GM12878 (cell line): ENCODE measurements at regions of chr20 and their contacts with region 1.

Region 1: DNA sequence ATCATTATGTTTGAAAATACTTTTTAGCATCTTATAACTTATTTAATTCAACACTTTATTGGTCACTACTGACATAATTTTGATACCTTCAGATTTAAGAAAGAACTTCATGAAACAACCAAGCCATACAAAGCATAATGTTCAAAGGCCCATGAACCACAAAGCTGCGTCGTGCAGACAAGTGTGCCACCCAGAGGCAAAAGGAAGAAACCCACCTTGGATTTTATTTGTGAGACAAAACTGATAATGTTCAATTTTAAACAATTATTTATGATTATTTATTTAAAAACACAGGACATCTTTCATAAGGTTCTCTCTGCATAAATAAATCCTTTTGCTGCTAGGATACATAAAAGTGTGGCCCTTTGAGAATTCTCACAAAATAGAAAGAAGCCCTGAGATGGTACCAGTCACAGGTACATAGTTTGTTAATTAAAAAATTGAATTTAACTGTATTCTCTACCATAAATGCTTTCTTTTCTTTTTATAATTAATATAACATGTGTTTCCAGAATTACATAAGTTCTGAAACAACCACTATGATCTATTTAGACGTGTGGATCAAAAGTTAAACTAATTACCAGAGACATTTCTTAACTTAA is 143.7 kb downstream of the RALGAPA2 start:
- DNase-seq: no peak
- ATAC-seq: peak; percentile 66
- H3K4me3 ChIP-seq: no peak overlapping the region
- H3K27ac ChIP-seq: no peak overlapping the region
- H3K4me1 ChIP-seq: no peaks in the 10 kb centered on the region
- H3K27me3 ChIP-seq: no peaks in the 10 kb centered on the region
- CTCF ChIP-seq: peak; percentile 65 to 88 (median 69)
- EP300 ChIP-seq: no peak
- POLR2A ChIP-seq: no peak
- RAD21 ChIP-seq: peak; percentile 98

Region 2: DNA sequence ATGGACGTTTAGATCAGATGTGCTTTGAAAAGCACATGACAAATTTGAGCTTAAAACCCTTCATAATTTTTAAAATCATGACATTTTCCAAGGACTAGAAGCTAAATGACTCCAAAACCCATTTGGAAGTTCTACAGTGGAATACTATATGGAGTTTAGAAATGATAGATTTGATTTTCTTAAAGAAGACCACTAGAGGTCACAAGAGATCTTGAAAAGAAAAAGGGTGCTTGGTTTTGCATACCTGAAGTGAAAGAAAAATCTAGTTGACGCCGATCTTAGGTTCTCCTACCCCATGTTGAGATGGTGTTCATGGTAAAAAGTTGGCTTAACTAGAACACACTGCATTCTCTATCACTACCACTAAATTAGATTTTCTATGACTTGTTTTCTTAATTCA is 484.9 kb before region 1 on chr20:
- CTCF ChIA-PET with region 1: interaction called, 21 read pairs
- POLR2A ChIA-PET with region 1: no interaction called
- RAD21 ChIA-PET with region 1: interaction called, 5 read pairs
- SMC1A ChIA-PET with region 1: interaction called, 5 read pairs
- in situ Hi-C with region 1: loop called (anchors 5 kb)
- intact Hi-C with region 1: loop called (anchors 2 kb)
- DNase-seq: peak; percentile 2
- ATAC-seq: peak; percentile 81
- H3K4me3 ChIP-seq: no peak overlapping the region
- H3K27ac ChIP-seq: no peak overlapping the region
- H3K4me1 ChIP-seq: no peaks in the 10 kb centered on the region
- H3K27me3 ChIP-seq: no peaks in the 10 kb centered on the region; a peak in 2 of 4 replicates
- CTCF ChIP-seq: peak; percentile 31 to 56 (median 43); a peak in 4 of 6 replicates
- EP300 ChIP-seq: no peak
- POLR2A ChIP-seq: no peak
- RAD21 ChIP-seq: peak; percentile 69

Region 3: DNA sequence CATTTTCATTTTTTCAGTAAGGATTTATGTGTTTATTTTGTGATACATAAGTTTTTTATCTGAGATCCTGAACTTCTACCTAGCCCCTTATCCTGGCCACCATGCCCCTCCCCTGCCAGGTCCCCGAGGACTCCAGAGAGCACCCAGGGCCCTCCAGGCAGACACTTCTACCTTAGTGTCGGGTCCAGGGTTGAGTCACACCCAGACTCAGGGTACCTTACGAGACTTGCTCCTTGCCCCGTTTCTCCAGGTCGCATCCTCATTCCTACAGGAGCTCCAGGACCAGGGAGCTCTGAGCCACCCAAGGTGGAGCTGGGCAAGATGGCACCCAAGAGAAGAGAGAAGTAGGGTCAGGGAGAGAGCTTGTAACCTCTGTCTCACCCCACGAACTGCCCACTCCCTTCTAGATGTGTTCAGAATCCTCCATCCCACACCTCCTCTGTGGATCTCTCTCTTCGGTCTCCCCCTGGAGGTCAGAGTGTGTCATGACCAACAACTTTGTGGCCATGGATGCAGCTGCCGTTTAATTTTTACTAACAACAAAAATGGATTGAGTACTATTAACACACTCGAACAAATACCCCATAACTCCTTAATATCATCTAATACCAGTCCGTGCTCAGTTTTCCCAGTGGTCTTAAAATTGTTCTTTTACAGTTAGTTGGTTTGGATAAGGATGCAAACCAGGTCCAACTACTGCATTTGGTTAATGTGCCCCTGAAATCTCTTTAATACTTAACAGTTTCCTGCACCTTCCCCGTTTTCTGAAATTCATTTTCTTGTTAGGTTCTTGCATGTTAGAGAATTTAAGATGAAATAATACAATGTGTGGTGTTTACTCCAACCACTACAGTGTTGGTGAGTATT is 331.4 kb before region 1 on chr20:
- CTCF ChIA-PET with region 1: no interaction called
- POLR2A ChIA-PET with region 1: no interaction called
- RAD21 ChIA-PET with region 1: no interaction called
- SMC1A ChIA-PET with region 1: interaction called, 3 read pairs
- in situ Hi-C with region 1: no loop called
- intact Hi-C with region 1: loop called (anchors 5 kb)
- DNase-seq: no peak
- ATAC-seq: peak; percentile 91
- H3K4me3 ChIP-seq: no peak overlapping the region
- H3K27ac ChIP-seq: no peak overlapping the region
- H3K4me1 ChIP-seq: no peaks in the 10 kb centered on the region
- H3K27me3 ChIP-seq: no peaks in the 10 kb centered on the region; a peak in 1 of 4 replicates
- CTCF ChIP-seq: peak; percentile 74 to 78 (median 76)
- EP300 ChIP-seq: no peak
- POLR2A ChIP-seq: no peak
- RAD21 ChIP-seq: peak; percentile 74

Region 4: DNA sequence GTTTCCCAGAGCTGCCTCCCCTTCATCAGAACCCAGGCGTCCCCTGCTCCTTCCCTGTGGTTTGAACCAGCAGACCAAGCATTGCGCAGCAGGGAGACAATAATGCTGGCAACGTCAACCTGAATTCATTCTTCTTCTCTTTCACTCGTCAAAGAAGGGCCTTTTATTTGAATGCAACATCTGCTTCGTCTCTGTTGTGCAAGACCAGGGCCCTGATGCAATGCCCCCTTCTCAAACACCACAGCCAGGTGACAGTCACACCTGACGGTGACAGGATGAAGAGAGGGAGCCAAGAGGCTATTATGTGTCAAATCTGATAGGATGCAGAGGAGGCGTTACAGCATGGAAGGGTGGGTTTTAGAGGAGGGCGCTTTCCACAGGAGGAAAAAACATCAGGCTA is 192.8 kb before region 1 on chr20:
- CTCF ChIA-PET with region 1: interaction called, 3 read pairs
- POLR2A ChIA-PET with region 1: no interaction called
- RAD21 ChIA-PET with region 1: no interaction called
- SMC1A ChIA-PET with region 1: interaction called, 5 read pairs
- in situ Hi-C with region 1: no loop called
- intact Hi-C with region 1: loop called (anchors 5 kb)
- DNase-seq: no peak
- ATAC-seq: no peak
- H3K4me3 ChIP-seq: no peak overlapping the region
- H3K27ac ChIP-seq: no peak overlapping the region
- H3K4me1 ChIP-seq: no peaks in the 10 kb centered on the region
- H3K27me3 ChIP-seq: peaks cover 2 to 4% of the 10 kb centered on the region in 2 experiments; a peak in 3 of 4 replicates
- CTCF ChIP-seq: no peak
- EP300 ChIP-seq: no peak
- POLR2A ChIP-seq: no peak
- RAD21 ChIP-seq: no peak

Region 5: DNA sequence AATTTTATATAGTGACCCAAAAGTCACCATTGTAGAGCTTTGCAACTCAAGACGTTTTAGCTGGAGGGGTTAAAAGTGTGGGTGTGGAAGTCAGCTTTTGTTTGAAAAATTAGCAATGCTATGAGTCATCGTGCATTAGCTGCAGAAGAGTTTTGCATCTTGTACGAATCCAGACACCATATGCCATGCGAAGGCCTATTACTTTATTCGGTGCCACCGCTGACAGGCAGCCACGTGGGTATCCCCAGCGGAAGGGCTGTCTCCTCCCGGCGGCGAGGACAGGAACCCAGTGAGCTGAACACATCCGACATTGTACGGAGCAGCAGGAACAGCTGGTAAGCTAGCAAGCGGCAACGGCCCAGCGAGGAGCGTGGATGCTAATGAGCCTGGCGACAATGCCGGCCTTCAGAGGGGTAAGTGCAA is 116.4 kb before region 1 on chr20:
- CTCF ChIA-PET with region 1: interaction called, 7 read pairs
- POLR2A ChIA-PET with region 1: no interaction called
- RAD21 ChIA-PET with region 1: interaction called, 3 read pairs
- SMC1A ChIA-PET with region 1: interaction called, 23 read pairs
- in situ Hi-C with region 1: no loop called
- intact Hi-C with region 1: loop called (anchors 10 kb)
- DNase-seq: peak; percentile 63
- ATAC-seq: peak; percentile 95
- H3K4me3 ChIP-seq: peak overlapping the region; percentile 54; the same call in 1 of the 2 replicates
- H3K27ac ChIP-seq: peak overlapping the region; percentile 73
- H3K4me1 ChIP-seq: peaks cover 25% of the 10 kb centered on the region
- H3K27me3 ChIP-seq: no peaks in the 10 kb centered on the region
- CTCF ChIP-seq: peak in 1 of 3 experiments; percentile 4; a peak in 1 of 6 replicates
- EP300 ChIP-seq: 0 out of 4 replicates have a peak, but pooled peaks of 1 of the 2 experiments have one; percentile 12
- POLR2A ChIP-seq: peak; percentile 72
- RAD21 ChIP-seq: 0 out of 2 replicates have a peak, but pooled peaks have one; percentile 2

Region 6: DNA sequence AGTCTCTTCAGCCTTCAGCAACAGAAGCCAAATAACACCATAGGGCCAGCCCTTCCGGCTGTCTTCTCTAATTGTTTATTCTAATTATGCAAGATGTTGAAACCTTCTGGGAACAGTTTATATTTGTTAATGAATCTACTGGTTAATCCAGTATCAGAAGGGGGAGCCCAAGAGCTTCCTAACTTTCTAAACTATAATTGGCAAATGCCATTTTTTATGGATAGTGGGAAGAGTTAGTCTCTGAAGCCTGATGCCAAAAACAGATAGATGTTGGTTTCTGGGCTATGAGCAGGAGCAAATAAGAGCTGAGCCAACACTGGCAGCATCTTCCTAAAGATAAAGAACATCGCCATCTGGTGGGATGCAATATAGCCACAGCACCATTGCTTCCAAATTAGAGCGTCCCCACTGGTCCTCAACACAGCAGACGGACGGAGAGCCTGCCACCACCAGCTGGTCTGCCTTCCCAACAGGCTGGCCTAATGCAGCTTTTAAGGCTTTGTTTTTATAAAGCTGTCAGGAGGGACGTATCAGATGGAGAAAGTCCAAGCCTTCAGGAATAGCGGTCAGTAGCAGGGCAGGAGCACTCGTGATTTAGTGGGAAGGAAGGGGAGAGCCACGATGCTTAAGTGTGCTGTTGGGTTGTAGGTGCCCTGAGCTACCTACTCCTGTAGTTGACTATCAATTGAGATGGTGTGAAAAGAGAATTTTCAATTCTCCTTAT is 24.9 kb after region 1 on chr20:
- CTCF ChIA-PET with region 1: interaction called, 12 read pairs
- POLR2A ChIA-PET with region 1: no interaction called
- RAD21 ChIA-PET with region 1: interaction called, 5 read pairs
- SMC1A ChIA-PET with region 1: interaction called, 3 read pairs
- in situ Hi-C with region 1: no loop called
- intact Hi-C with region 1: no loop called
- DNase-seq: no peak
- ATAC-seq: peak; percentile 93
- H3K4me3 ChIP-seq: no peak overlapping the region
- H3K27ac ChIP-seq: no peak overlapping the region
- H3K4me1 ChIP-seq: no peaks in the 10 kb centered on the region
- H3K27me3 ChIP-seq: no peaks in the 10 kb centered on the region
- CTCF ChIP-seq: peak; percentile 47 to 63 (median 52); a peak in 5 of 6 replicates
- EP300 ChIP-seq: no peak
- POLR2A ChIP-seq: no peak
- RAD21 ChIP-seq: peak; percentile 43